Sigmoid colon (tissue), 7 donors: ENCODE measurements at regions of chr10 and their contacts with region 1.

Region 1: DNA sequence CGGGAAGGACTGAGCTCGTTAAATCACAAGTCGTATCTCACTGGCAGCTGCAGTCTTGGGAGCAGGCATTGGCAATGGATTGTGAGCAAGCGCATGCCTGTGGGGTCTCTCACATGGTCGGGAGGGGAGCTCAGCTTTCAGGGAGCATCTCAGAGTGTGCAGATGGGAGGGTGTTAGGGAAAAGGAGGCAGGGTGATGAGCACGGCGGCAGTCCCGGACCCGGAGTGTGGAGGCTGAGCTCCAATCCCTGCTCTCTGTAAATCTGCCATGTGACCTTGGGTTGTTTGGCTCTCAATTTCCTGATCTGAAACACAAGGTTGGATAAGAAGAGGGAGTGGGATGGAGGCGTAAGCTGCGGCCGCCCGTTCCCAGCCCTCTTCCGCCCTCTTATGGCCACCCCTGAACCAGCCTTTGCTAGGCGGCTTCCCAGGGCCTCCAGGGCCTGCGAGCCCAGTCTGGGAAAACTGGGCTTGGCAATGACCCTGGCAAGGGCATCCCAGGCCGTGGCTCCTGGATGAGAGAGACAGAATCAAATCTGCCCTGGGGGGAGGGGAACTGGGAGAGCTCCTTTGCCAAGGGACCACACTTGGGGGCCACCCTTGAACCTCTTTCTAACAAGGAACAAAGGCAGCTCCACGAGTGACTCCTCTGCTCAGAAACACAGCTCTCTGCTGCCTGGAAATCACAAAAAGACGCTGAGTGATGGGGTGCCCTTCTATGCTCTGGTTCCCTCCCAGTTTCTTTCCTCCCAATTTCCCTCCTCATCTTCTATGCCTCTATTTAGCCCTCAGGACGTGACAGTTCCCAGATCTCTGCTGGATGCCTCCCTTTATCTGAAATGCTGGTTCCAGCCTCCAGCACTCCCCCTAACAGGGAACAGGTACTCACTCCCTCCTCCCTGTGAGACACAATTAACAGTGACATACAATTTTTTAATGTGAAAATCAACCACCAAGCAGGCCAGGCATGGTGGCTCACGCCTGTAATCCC is 41.7 kb upstream of the LOXL4 start:
- DNase-seq: peak; percentile 86
- H3K4me3 ChIP-seq: peak overlapping the region in 2 of 4 donors; percentile 27 to 28
- H3K27ac ChIP-seq: peak overlapping the region in 2 of 4 donors; percentile 29
- H3K4me1 ChIP-seq: peaks cover 0 to 21% (median 12%) of the 10 kb centered on the region in 4 donors
- H3K27me3 ChIP-seq: no peaks in the 10 kb centered on the region
- CTCF ChIP-seq: peak; percentile 77 to 90 (median 80)
- EP300 ChIP-seq: no peak
- POLR2A ChIP-seq: no peak

Region 2: DNA sequence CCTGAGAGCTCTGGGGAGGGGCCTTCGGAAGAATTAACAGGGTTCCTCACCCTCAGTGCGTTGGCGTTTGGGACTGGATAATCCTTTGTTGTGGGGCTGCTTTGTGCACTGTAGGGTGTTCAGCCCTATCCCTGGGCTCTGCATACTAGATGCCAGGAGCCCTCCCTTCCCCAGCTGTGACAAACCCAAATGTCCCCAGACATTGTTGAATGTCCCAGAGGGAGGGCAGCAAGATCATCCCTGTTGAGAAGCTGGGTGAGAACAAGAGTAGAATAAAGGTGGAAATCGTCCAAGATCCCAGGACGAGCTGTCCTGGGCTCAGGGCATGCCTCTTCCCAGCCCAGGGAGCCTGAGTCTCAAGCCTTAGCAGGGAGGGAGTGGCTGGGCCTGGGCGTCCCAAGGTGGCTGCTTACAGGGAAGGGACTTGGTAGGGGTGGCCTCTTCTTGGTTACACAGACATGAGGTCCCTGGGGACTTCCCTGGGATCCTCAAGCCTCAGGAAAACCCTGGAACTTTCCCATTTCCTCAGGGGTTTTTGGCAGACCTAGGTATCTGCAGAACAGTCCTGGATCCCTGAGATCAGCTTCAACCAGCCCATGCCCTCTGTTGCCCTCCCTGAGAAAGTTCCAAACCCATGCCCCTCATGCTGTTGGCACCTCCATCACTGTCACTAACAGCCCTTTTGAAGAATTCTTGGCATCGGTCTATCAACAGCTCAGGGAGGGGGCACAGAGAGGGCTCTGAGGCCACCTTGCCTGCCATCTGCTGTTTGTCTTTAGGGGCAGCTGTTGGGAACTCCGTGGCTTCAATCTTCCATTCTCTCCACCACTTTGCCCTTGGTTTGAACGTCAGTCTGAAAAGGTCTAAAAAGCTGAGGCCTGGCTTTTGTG is 406.3 kb before region 1 on chr10:
- intact Hi-C with region 1: no loop called
- DNase-seq: no peak
- H3K4me3 ChIP-seq: no peak overlapping the region
- H3K27ac ChIP-seq: no peak overlapping the region
- H3K4me1 ChIP-seq: no peaks in the 10 kb centered on the region
- H3K27me3 ChIP-seq: peaks cover 0 to 31% (median 0%) of the 10 kb centered on the region in 3 donors
- CTCF ChIP-seq: no peak
- EP300 ChIP-seq: no peak
- POLR2A ChIP-seq: no peak

Region 3: GRCh38 chr10:97914837-97915211 is 394.8 kb before region 1 on chr10:
- intact Hi-C with region 1: loop called (anchors 10 kb)
- DNase-seq: peak; percentile 79
- H3K4me3 ChIP-seq: no peak overlapping the region
- H3K27ac ChIP-seq: no peak overlapping the region
- H3K4me1 ChIP-seq: peaks cover 0 to 9% (median 7%) of the 10 kb centered on the region in 4 donors
- H3K27me3 ChIP-seq: peaks cover 0 to 14% (median 4%) of the 10 kb centered on the region in 3 donors
- CTCF ChIP-seq: peak; percentile 54 to 90 (median 74)
- EP300 ChIP-seq: no peak
- POLR2A ChIP-seq: no peak

Region 4: DNA sequence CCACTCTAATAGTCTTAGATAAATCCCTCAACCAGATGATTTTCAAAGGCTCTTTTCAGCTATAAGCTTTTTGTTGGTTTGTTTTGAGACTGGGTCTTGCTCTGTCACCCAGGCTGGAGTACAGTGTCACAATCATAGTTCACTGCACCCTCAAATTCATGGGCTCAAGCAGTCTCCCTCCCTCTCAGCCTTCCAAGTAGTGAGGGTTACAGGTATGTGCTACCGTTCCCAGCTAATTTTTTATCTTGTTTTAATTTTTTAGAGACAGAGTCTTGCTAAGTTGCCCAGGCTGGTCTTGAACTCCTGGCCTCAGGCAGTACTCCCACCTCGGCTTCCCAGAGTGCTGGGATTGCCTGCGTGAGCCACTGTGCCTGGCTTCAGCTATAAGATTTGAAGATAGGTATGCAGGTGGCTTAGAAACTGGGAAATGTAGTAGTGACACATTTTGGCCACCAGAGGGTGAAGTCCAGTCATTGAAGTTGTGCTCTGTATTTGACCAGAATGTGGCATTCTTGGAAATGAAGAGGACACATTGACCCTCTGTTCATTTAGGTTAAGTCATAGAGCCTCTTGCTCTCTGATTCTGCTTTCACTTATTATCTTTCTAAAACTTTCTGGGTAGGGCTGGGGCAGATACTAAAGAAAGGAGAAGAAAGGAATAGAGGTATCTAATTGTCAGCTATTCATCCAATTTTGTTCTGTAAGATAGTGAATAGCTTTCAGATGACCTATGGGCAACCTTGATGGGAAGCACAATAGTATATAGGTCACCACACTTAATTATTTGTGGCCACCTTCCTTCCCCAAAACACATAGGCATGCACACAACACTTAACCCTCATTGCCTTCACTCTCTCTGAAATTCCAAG is 139.2 kb before region 1 on chr10:
- intact Hi-C with region 1: loop called (anchors 1 kb)
- DNase-seq: no peak
- H3K4me3 ChIP-seq: no peak overlapping the region
- H3K27ac ChIP-seq: no peak overlapping the region
- H3K4me1 ChIP-seq: peaks cover 0 to 24% (median 22%) of the 10 kb centered on the region in 4 donors
- H3K27me3 ChIP-seq: no peaks in the 10 kb centered on the region
- CTCF ChIP-seq: peak; percentile 25 to 77 (median 59)
- EP300 ChIP-seq: no peak
- POLR2A ChIP-seq: no peak

Region 5: GRCh38 chr10:98242823-98243222 is 66.8 kb before region 1 on chr10:
- intact Hi-C with region 1: loop called (anchors 2 kb)
- DNase-seq: no peak
- H3K4me3 ChIP-seq: no peak overlapping the region
- H3K27ac ChIP-seq: peak overlapping the region in 1 of 4 donors; percentile 73
- H3K4me1 ChIP-seq: peaks cover 0 to 53% (median 31%) of the 10 kb centered on the region in 4 donors
- H3K27me3 ChIP-seq: no peaks in the 10 kb centered on the region
- CTCF ChIP-seq: peak; percentile 20 to 56 (median 32)
- EP300 ChIP-seq: no peak
- POLR2A ChIP-seq: no peak

Region 6: GRCh38 chr10:98267894-98268693 is 41.6 kb before region 1 on chr10 and contains the start of gene LOXL4:
- intact Hi-C with region 1: loop called (anchors 2 kb)
- DNase-seq: peak; percentile 78
- H3K4me3 ChIP-seq: peak within 1 kb of the TSS; percentile 48 to 67 (median 54)
- H3K27ac ChIP-seq: peak within 1 kb of the TSS; percentile 86 to 92 (median 90)
- H3K4me1 ChIP-seq: peaks cover 0 to 45% (median 43%) of the 10 kb centered on the region in 4 donors
- H3K27me3 ChIP-seq: no peaks in the 10 kb centered on the region
- CTCF ChIP-seq: no peak
- EP300 ChIP-seq: no peak
- POLR2A ChIP-seq: no peak
- total RNA-seq, gene LOXL4: 6.7 to 15.8 (median 11.3) TPM